Posterior vena cava (tissue), 2 donors: ENCODE measurements at regions of chr2 and their contacts with region 1.

Region 1: GRCh38 chr2:241000786-241001321 is 2.4 kb downstream of the SNED1 start:
- DNase-seq: peak; percentile 62

Region 2: DNA sequence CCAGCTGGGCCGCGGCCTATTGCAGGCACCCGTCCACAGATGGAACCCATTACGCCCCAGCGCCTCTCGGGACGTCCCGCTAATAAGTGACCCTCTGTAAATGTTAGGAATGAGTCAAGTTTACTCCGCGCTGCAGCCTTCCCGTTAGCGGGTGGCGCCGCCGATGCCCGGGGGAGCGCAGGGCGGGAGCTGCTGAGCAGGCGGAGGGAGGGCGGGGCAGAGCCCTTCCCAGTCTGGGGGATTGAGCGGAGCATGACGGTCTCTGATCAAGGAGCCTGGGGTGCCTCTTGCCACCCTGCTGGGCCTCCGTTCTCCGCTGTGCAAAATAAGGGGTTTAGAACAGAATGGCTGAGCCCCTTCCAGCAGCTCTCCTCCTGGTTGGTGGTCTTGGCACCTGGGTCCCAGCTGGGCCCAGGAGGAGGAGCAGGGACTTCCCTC is 84.3 kb before region 1 on chr2:
- intact Hi-C with region 1: loop called in 1 of 2 experiments (anchors 5 kb)
- DNase-seq: peak; percentile 96

Region 3: DNA sequence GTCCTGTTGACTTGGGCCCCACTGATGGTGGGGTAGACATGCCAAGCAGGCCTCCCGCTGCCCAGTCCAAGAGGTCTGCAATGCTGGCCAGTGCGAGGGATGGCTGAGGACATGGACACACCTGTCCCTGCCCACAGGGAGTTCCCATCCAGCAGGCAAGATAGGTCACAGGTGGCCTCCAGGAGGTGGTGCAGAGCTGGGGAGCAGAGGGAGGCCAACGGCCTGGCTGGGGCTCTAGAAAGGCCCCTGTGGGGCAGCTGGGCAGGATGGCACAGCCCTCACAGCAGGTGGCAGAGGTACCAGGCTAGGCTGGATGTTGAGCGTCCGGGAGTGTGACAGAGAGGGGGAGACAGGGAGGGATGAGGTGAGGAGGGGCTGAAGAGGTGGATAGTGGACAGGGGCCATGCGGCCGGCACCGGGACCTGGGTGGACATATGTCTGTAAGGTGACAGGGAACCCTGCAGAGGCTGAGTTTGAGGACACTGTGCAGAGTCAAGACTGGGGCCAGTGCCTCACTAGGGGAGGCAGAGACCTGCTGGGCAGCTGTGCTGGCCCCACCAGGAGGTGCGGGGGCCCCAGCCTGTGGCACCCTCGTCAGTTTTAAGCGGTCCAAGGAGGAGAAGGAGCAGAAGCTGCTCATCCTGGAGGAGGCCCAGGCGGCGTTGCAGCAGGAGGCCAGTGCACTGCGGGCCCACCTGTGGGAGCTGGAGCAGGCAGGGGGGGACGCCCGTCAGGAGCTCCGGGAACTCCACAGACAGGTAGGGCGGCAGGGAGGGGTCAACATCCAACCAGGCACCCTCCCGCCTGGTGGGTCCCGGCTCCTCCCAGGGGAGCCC is 36.8 kb before region 1 on chr2:
- intact Hi-C with region 1: loop called in 1 of 2 experiments (anchors 1 kb)
- DNase-seq: peak; percentile 78

Region 4: DNA sequence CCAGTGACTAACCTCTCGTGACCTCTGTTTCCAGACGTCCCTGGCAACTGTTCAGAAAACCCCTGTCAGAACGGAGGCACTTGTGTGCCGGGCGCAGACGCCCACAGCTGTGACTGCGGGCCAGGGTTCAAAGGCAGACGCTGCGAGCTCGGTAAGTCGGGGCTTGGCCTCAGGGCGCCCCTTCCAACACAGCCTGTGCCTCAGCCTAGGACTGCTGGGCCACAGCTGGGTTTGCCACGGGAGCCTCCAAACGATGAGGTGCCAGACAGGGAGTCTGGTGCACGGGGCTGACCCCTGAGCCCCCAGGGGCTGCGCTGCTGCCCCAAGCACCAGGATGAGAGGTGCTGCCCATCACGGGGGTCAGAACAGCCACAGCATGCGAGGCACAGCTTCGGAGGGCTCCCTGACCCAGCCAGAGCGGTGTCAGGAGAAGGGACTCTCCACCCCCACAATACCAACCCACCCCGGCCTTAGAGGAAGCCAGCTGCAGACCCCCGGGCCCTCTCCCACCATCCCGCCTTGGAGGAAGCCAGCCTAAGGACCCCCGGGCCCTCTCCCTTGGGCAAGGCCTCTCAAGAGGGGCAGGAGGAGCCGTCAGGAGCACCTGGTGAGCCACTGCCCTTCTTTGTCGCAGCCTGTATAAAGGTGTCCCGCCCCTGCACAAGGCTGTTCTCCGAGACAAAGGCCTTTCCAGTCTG is 80.9 kb after region 1 on chr2:
- intact Hi-C with region 1: no loop called
- DNase-seq: peak; percentile 72